ENCODE measurements at regions of chr4 and their contacts with region 1.

Region 1: DNA sequence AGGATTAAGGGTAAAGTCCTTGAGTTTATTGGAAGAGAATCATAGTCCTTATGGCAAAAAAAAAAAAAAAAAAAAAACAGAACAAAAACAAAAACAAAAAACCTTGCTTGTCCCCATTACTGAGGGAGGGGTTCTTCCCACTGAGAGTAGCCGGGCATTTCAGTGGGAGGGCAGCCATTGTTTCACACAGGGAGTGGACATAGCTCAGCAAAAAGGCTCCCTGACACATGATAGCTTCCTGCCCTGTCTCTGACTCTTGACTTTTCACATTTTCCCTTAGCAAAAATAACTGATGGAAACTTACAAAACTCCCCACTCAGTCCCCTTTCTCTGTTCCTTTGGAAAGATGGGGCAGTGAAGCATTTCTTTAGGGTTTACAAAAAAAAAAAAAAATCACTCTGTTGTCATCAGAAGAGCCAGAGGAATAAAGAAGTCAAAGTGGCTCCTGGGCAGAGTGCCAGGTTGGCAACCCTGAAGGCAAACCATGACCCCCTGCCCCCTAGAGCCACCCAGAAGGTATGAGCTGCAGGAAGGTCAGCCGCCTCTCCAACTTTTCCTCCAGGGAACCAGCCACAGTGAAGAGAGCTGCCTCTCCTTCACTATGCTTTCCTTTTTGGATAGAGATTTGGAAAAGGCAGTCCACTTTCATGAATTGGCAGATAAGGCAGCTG is 170.6 kb downstream of the KDR start:
- DNase-seq: no peak
- ATAC-seq: no peak
- H3K4me3 ChIP-seq: no peak overlapping the region
- H3K27ac ChIP-seq: no peak overlapping the region
- H3K4me1 ChIP-seq: peaks cover 4% of the 10 kb centered on the region
- H3K27me3 ChIP-seq: no peaks in the 10 kb centered on the region
- CTCF ChIP-seq: no peak
- POLR2A ChIP-seq: no peak
- RAD21 ChIP-seq: no peak

Region 2: DNA sequence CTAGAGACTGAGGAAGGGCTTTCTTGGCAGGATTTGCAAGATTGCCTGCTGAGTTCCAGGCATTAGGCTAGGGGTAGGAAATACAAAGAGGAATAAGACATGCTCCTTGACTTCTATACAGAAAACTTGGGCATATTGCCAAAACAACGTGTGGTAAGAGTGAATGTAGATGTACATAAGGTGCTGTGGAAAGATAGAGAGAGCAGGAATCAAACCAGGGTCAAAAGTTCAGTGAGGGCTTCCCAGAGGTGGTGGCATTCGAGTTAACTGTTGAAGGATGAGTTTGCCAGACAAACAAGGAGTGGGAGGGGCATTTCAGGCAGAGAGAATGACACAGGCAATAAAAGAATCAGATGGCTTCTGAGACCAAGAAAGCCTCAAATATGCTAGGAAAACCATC is 17.3 kb before region 1 on chr4:
- CTCF ChIA-PET with region 1: no interaction called
- POLR2A ChIA-PET with region 1: interaction called, 17 read pairs
- dilution Hi-C with region 1: no loop called
- in situ Hi-C with region 1: no loop called
- intact Hi-C with region 1: no loop called
- DNase-seq: no peak
- ATAC-seq: no peak
- H3K4me3 ChIP-seq: no peak overlapping the region
- H3K27ac ChIP-seq: no peak overlapping the region
- H3K4me1 ChIP-seq: no peaks in the 10 kb centered on the region
- H3K27me3 ChIP-seq: peaks cover 2% of the 10 kb centered on the region; the same call in 1 of the 2 replicates
- CTCF ChIP-seq: no peak
- POLR2A ChIP-seq: no peak
- RAD21 ChIP-seq: no peak

Region 3: GRCh38 chr4:54999003-54999402 is 44.2 kb after region 1 on chr4:
- CTCF ChIA-PET with region 1: no interaction called
- POLR2A ChIA-PET with region 1: no interaction called
- dilution Hi-C with region 1: no loop called
- in situ Hi-C with region 1: no loop called
- intact Hi-C with region 1: no loop called
- DNase-seq: peak; percentile 4
- ATAC-seq: peak; percentile 46; the same call in 1 of the 2 replicates
- H3K4me3 ChIP-seq: no peak overlapping the region
- H3K27ac ChIP-seq: no peak overlapping the region
- H3K4me1 ChIP-seq: no peaks in the 10 kb centered on the region
- H3K27me3 ChIP-seq: peaks cover 2% of the 10 kb centered on the region; the same call in 1 of the 2 replicates
- CTCF ChIP-seq: peak; percentile 20; the same call in 1 of the 2 replicates
- POLR2A ChIP-seq: no peak
- RAD21 ChIP-seq: peak; percentile 28; the same call in 1 of the 2 replicates